Activated naive CD8-positive, alpha-beta T cell treated with anti-CD3 and anti-CD28 coated beads, Interleukin-2, amount 10 ng/mL, durations not matched to agents 7 days and 5 days (primary cell): ENCODE measurements at regions of chr17 and their contacts with region 1.

Region 1: GRCh38 chr17:51153210-51154072 is at the start of gene NME1:
- DNase-seq: peak; percentile 98
- ATAC-seq: peak; percentile 95
- H3K4me3 Mint-ChIP-seq: no peak within 1 kb of the TSS
- H3K27ac Mint-ChIP-seq: no peak within 1 kb of the TSS
- H3K4me1 Mint-ChIP-seq: peaks cover 8% of the 10 kb centered on the region
- H3K27me3 Mint-ChIP-seq: no peaks in the 10 kb centered on the region
- total RNA-seq, gene NME1: 71.9 to 73.0 TPM

Region 2: GRCh38 chr17:51120739-51121617 is 32.5 kb before region 1 on chr17 and contains the start of gene SPAG9:
- POLR2A ChIA-PET with region 1: interaction called, 23 read pairs
- DNase-seq: peak; percentile 99
- ATAC-seq: peak; percentile 79
- H3K4me3 Mint-ChIP-seq: peak within 1 kb of the TSS; percentile 89
- H3K27ac Mint-ChIP-seq: peak within 1 kb of the TSS; percentile 96
- H3K4me1 Mint-ChIP-seq: peaks cover 38% of the 10 kb centered on the region
- H3K27me3 Mint-ChIP-seq: no peaks in the 10 kb centered on the region
- total RNA-seq, gene SPAG9: 52.3 to 62.9 TPM

Region 3: DNA sequence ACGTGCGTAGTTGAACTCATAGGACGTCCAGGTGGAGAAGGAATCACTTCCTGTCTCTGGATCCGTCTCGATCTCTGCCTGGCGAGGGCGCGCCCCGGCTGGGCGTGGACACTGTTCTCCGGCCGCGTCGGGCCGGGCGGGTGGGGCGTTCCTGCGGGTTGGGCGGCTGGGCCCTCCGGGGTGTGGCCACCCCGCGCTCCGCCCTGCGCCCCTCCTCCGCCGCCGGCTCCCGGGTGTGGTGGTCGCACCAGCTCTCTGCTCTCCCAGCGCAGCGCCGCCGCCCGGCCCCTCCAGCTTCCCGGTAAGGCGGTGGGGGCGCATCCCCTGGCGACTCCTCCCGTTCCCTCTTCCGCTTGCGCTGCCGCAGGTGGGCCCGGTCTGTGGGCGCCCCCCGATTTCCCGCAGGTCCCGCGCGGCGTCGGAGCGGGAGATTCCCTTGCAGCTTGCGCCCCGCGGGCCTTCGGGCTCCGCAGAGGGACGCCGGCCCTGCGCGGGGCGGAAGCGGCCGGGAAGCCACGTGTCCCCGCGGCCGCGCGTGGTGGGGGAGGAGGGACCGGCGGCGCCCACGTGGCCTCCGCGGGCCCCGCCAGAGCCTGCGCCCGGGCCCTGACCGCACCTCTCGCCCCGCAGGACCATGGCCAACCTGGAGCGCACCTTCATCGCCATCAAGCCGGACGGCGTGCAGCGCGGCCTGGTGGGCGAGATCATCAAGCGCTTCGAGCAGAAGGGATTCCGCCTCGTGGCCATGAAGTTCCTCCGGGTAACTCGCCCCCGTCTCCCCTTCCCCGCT is 13.0 kb after region 1 on chr17 and contains the start of gene NME2:
- POLR2A ChIA-PET with region 1: interaction called, 17 read pairs
- DNase-seq: peak; percentile 84
- ATAC-seq: peak; percentile 78
- H3K4me3 Mint-ChIP-seq: peak within 1 kb of the TSS; percentile 92
- H3K27ac Mint-ChIP-seq: peak within 1 kb of the TSS; percentile 96
- H3K4me1 Mint-ChIP-seq: peaks cover 28% of the 10 kb centered on the region
- H3K27me3 Mint-ChIP-seq: no peaks in the 10 kb centered on the region
- total RNA-seq, gene NME2: 354 to 361 TPM

Region 4: GRCh38 chr17:51180486-51180885 is 27.0 kb after region 1 on chr17:
- POLR2A ChIA-PET with region 1: no interaction called
- DNase-seq: no peak
- ATAC-seq: no peak
- H3K4me3 Mint-ChIP-seq: no peak overlapping the region
- H3K27ac Mint-ChIP-seq: no peak overlapping the region
- H3K4me1 Mint-ChIP-seq: no peaks in the 10 kb centered on the region
- H3K27me3 Mint-ChIP-seq: no peaks in the 10 kb centered on the region